Body of pancreas (tissue), 4 donors: ENCODE measurements at regions of chr17 and their contacts with region 1.

Region 1: DNA sequence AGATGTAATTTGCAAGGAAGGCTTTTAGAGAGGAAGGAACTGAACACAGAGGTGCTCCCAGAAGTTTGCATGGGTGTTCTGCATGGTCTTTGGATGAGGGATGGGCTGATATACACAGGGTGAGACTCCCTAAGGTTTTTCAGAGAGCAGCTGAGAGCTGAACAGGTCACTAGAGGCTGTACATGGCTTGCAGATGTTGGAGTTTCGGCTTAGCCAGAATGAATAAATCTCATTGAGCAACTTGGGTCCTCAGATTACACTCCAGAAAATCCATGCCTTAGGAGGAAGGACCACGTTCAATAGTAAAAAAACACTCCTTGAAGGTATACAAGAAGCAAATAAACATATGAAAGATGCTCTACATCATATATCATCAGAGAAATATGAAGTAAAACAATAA is 7.5 kb upstream of the ITGB3 start:
- DNase-seq: no peak
- ATAC-seq: no peak
- H3K4me3 ChIP-seq: no peak overlapping the region
- H3K27ac ChIP-seq: no peak overlapping the region
- H3K4me1 ChIP-seq: no peaks in the 10 kb centered on the region
- H3K27me3 ChIP-seq: no peaks in the 10 kb centered on the region
- CTCF ChIP-seq: no peak
- POLR2A ChIP-seq: no peak

Region 2: GRCh38 chr17:47305302-47305923 is 59.3 kb after region 1 on chr17:
- intact Hi-C with region 1: loop called (anchors 5 kb)
- DNase-seq: peak in 1 of 4 donors; percentile 16
- ATAC-seq: peak; percentile 78
- H3K4me3 ChIP-seq: no peak overlapping the region
- H3K27ac ChIP-seq: peak overlapping the region in 2 of 4 donors; percentile 47 to 61
- H3K4me1 ChIP-seq: peaks cover 6% of the 10 kb centered on the region
- H3K27me3 ChIP-seq: no peaks in the 10 kb centered on the region
- CTCF ChIP-seq: no peak
- POLR2A ChIP-seq: no peak

Region 3: GRCh38 chr17:47941236-47941994 is 695.3 kb after region 1 on chr17 and contains the start of gene PNPO:
- intact Hi-C with region 1: no loop called
- DNase-seq: peak; percentile 94 to 98 (median 96)
- ATAC-seq: peak; percentile 98
- H3K4me3 ChIP-seq: peak within 1 kb of the TSS; percentile 19 to 63
- H3K27ac ChIP-seq: peak within 1 kb of the TSS; percentile 82 to 92 (median 88)
- H3K4me1 ChIP-seq: peaks cover 61% of the 10 kb centered on the region
- H3K27me3 ChIP-seq: no peaks in the 10 kb centered on the region
- CTCF ChIP-seq: peak in 3 of 7 experiments; percentile 31 to 39 (median 33)
- POLR2A ChIP-seq: peak; percentile 52 to 78 (median 77)
- total RNA-seq, gene PNPO: 27.8 to 55.4 TPM